Dorsolateral prefrontal cortex (tissue), 120 donors: ENCODE measurements at regions of chr20 and their contacts with region 1.

Region 1: DNA sequence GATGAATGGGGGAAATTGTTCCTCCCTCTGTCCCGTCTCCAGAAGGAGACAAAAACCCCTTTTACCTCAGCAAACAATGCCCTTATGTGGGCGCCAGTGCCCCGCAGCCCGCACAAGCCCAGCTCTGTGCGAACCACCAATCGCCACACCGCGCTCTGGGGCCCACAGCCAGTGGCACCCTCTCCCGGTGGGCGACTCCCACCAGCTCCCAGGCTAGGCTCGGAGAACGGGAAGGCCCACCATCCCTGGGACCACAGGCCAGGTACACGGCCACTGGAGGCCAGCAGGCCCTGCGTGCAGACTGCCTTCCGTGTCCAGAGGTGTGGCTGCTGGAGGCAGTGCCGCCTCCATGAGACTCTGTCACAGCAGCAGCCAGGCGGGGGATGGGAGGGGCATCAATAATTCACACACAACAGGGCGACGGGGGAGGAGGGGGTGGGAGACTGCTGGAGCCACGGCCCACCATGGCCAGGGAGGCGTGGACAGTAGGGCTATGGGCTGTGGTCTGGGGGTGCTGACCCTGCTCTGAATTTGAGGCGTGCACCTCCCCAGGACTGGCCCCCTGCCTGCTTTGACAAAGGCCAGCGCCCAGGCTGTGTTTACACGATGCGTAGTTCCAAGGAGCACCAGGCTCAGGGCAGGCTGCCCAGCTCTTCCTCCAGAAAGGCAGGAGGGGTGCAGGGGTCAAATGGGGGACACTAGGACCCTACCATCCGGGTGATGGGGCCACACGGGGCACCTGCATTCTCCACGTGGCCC is 105.7 kb downstream of the ASXL1 start:
- DNase-seq: peak in 9 of 10 donors; percentile 79 to 90 (median 85)
- H3K4me3 ChIP-seq: peak overlapping the region in 39 of 59 donors; percentile 3 to 51 (median 24)
- H3K27ac ChIP-seq: peak overlapping the region; percentile 84 to 99 (median 98)
- H3K27me3 ChIP-seq: no peaks in the 10 kb centered on the region
- CTCF ChIP-seq: peak in 34 of 56 donors; percentile 5 to 60 (median 29)

Region 2: GRCh38 chr20:32302507-32302872 is 161.3 kb before region 1 on chr20:
- intact Hi-C with region 1: no loop called
- DNase-seq: no peak
- H3K4me3 ChIP-seq: no peak overlapping the region
- H3K27ac ChIP-seq: no peak overlapping the region
- H3K27me3 ChIP-seq: no peaks in the 10 kb centered on the region
- CTCF ChIP-seq: no peak

Region 3: DNA sequence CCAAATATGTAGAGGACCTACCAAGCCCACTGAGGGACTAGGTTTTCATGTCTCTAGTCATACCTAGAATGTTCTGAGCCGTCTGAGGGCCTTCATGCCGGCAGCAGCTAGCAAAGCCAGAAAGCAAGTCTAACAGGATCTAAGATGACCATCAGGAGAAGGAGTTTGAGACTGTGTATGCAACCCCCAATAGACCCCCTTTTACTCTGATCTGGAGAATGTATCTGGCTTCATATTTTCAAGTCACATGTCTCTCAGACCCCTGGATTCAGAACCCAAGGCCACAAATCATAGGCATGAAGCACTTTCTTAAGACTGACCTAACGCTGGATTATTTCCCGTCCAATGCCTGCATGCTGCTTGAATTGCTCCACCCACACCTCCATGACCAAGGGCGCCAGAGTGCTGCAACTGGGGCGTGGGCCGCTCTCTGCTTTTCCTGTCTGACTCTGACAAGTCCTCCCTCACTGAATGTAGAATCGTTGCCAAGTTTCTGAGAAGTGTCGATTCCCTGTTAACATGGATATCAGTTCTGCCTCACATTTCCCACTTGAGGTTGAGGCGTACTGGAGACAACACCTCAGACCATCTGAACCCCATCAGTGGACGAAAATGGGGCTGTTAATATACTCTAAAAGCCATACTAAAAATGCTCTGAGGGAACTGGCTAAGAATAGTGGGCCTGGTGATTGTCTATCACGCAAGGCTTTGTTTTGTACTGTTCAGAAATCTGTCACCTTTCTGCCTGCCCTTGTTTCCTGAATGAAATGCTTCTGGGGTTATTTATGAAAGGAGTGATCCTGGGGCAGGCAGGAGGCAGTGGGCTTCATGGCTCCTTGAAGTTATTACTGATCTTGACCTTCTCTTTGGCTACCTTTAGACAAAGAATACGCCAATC is 129.6 kb before region 1 on chr20:
- intact Hi-C with region 1: no loop called
- DNase-seq: peak in 6 of 10 donors; percentile 30 to 62 (median 43)
- H3K4me3 ChIP-seq: no peak overlapping the region
- H3K27ac ChIP-seq: peak overlapping the region in 52 of 59 donors; percentile 2 to 82 (median 56)
- H3K27me3 ChIP-seq: no peaks in the 10 kb centered on the region
- CTCF ChIP-seq: no peak

Region 4: DNA sequence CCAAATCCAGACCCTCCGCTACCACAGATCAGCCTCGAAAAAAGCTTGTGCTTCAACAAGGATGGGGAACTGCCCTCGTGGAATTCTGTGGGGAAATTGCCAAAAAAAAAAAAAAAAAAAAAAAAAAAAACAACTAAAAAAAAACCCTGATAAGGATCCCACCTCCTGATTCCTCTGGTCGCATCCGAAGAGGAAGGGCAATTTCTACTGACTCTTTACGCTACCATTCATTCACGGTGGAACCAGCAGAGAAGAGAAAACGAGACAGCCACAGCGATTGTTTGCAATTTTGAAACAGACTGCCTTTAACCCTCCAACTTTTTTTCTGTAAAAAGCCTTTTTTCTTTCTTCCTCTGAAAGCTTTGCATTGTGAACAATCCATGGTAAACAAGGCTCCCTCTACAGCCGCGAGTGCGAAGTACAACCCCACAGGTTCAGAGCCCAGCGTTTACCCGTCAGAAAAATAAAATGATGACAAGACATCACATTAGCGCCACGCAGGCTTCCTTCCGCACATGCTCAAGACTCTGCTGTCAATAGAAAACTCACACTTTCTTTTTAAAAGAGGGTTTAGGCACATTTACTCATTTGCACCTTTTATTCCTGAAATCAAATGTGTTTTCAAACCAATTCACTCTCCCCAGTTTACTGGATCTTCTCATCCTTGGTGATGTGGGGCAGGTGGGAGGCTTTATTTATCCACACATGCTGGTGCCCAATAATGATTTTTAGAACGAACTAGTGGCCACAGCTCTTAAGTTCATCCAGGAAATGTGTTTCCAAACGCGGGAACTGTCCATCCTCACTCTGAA is 21.3 kb after region 1 on chr20:
- intact Hi-C with region 1: loop called in 1 of 2 experiments (anchors 1 kb)
- DNase-seq: peak; percentile 82 to 95 (median 88)
- H3K4me3 ChIP-seq: peak overlapping the region in 58 of 59 donors; percentile 42 to 92 (median 78)
- H3K27ac ChIP-seq: peak overlapping the region; percentile 58 to 99 (median 96)
- H3K27me3 ChIP-seq: no peaks in the 10 kb centered on the region
- CTCF ChIP-seq: peak; percentile 72 to 95 (median 88)

Region 5: DNA sequence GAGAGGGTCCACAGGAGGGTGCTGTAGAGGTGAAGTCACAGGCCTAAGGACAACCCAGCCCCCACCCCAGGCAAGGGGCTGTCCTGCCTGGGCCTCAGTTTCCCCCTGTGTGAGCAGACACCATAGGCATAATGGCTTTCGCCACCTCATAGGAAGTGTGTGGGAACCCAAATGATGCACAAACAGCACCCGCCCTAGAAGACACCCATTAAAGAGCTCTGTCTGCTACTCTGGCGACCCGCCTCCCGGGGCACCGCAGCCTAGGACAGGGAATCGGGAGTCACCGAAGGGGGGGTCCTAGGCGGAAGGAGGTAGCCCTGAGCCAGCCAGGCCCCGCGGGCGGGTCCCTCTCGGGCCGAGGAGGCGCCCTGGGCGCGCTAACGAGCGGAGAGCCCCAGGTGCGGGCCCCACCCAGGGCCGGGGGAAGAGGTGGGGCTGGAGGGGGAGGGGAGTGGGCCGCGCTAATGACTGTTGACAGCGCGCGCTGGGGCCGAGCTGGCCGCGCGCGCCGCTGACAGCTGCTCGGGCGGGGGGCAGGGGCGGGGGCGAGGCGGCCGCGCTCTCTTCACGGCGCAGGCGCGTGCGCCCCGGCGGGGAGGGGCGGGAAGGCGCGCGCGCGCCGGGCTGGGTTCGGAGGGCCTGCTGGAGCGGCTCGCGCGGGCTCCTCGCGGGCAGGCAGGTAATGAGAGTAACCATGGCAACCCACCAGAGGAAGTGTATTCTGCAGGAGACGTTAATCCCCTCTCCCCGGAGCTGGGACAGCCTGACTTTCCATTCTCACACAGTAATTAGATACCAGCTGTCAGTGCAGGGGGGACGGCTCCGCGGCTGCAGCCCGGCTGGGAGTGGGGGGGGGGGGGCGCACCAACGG is 72.4 kb after region 1 on chr20:
- intact Hi-C with region 1: no loop called
- DNase-seq: peak in 5 of 10 donors; percentile 50 to 84 (median 74)
- H3K4me3 ChIP-seq: peak overlapping the region; percentile 36 to 71 (median 60)
- H3K27ac ChIP-seq: peak overlapping the region; percentile 27 to 98 (median 91)
- H3K27me3 ChIP-seq: no peaks in the 10 kb centered on the region
- CTCF ChIP-seq: no peak

Region 6: GRCh38 chr20:33092361-33092760 is 628.5 kb after region 1 on chr20:
- intact Hi-C with region 1: no loop called
- DNase-seq: no peak
- H3K4me3 ChIP-seq: no peak overlapping the region
- H3K27ac ChIP-seq: no peak overlapping the region
- H3K27me3 ChIP-seq: no peaks in the 10 kb centered on the region
- CTCF ChIP-seq: no peak